Activated CD4-positive, alpha-beta memory T cell treated with anti-CD3 and anti-CD28 coated beads for 36 hours (primary cell): ENCODE measurements at regions of chr2 and their contacts with region 1.

Region 1: GRCh38 chr2:230987137-230988020 is 8.5 kb upstream of the SPATA3 start:
- DNase-seq: peak; percentile 83
- H3K4me3 Mint-ChIP-seq: peak overlapping the region; percentile 41
- H3K27ac Mint-ChIP-seq: peak overlapping the region; percentile 2
- H3K4me1 Mint-ChIP-seq: peaks cover 38% of the 10 kb centered on the region
- H3K27me3 Mint-ChIP-seq: peaks cover 24% of the 10 kb centered on the region

Region 2: GRCh38 chr2:230847883-230848388 is 139.4 kb before region 1 on chr2:
- CTCF ChIA-PET with region 1: interaction called, 79 read pairs
- POLR2A ChIA-PET with region 1: no interaction called
- intact Hi-C with region 1: loop called (anchors 1 kb)
- DNase-seq: peak; percentile 96
- H3K4me3 Mint-ChIP-seq: peak overlapping the region; percentile 21
- H3K27ac Mint-ChIP-seq: peak overlapping the region; percentile 33
- H3K4me1 Mint-ChIP-seq: peaks cover 20% of the 10 kb centered on the region
- H3K27me3 Mint-ChIP-seq: peaks cover 31% of the 10 kb centered on the region

Region 3: DNA sequence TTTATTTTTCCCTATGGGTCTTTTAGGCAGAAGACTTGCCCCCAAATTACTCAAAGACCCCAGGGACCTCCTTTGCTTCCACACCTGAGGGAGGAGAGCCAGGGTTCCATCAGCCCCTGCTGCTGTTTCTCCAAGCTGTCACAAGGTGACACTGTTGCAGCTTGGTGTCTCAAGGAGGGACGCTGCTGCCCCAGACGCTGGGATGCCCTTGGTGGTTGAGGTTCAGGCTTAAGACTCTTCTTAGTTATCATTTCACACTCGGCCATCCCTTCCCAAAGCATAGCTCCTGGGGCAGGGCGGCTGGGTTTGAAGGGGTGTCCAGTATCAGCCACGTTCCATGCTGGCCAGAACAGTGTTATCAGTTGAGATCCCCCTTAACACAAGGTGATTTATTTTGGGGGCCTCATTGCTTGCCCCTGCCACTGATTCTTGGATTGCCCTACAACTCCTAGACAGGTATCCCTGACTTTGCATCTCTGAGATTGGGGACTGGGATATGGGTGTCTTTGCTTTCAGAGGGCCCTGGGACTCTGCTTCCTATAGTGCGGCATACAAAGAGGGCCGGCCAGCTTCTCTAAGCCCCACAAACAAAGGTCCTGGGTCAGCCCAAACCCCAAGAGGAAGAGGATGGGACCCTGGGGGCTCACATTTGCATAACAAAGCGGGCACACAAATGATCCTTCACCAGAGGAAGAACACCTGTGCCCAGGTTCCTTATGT is 85.0 kb before region 1 on chr2:
- CTCF ChIA-PET with region 1: interaction called, 313 read pairs
- POLR2A ChIA-PET with region 1: interaction called, 15 read pairs
- intact Hi-C with region 1: loop called (anchors 1 kb)
- DNase-seq: peak; percentile 72
- H3K4me3 Mint-ChIP-seq: no peak overlapping the region
- H3K27ac Mint-ChIP-seq: no peak overlapping the region
- H3K4me1 Mint-ChIP-seq: peaks cover 49% of the 10 kb centered on the region
- H3K27me3 Mint-ChIP-seq: peaks cover 21% of the 10 kb centered on the region

Region 4: GRCh38 chr2:230924470-230925341 is 62.7 kb before region 1 on chr2 and contains the start of gene GPR55:
- CTCF ChIA-PET with region 1: interaction called, 110 read pairs
- POLR2A ChIA-PET with region 1: interaction called, 49 read pairs
- intact Hi-C with region 1: loop called (anchors 1 kb)
- DNase-seq: peak; percentile 90
- H3K4me3 Mint-ChIP-seq: peak within 1 kb of the TSS; percentile 74
- H3K27ac Mint-ChIP-seq: peak within 1 kb of the TSS; percentile 91
- H3K4me1 Mint-ChIP-seq: peaks cover 58% of the 10 kb centered on the region
- H3K27me3 Mint-ChIP-seq: peaks cover 11% of the 10 kb centered on the region
- total RNA-seq, gene GPR55: 1.5 to 1.6 TPM

Region 5: DNA sequence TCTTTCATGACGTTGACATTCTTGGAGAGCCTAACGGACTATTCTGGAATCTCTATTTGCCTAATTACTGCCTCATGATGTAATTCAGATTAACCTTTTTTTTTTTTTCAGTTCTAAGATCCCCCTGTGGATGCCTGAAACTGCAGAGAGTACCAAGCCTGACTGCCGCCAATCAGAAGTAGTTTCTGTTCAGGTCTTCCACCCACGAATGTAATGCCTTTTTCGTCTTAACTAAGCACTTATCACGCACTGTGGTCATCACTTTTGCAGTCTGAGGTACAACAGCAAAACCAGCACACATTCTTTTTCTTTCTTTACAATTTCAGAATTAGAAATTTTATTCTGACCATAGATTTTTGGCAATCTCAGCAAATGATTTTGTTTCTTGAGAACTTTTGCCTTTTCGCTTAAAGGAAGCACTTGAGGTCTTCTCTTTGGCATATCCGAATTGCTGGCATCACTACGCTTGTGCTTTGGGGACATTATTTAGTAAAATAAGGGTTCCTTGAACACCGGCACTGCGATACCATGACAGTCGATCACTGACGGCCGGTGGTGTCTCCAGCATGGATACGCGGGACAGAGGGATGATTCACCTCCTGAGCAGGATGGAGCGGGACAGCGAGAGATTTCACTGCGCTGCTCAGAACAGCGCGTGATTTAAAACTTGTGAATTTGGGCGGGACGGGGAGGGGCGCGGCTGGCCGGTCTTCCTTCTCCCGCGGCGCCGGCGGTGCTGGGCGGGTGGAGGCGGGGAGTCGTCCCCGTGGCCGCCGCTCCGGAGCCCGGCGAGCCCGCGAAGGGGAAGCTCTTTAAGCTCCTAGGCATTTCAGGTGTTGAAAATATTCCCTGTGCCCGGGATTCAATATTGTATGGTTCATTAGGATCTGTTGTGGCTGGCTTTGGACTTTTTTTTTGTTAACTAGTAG is 30.3 kb before region 1 on chr2:
- CTCF ChIA-PET with region 1: interaction called, 15 read pairs
- POLR2A ChIA-PET with region 1: interaction called, 5 read pairs
- intact Hi-C with region 1: loop called (anchors 1 kb)
- DNase-seq: peak; percentile 65
- H3K4me3 Mint-ChIP-seq: peak overlapping the region; percentile 77
- H3K27ac Mint-ChIP-seq: peak overlapping the region; percentile 82
- H3K4me1 Mint-ChIP-seq: peaks cover 46% of the 10 kb centered on the region
- H3K27me3 Mint-ChIP-seq: peaks cover 58% of the 10 kb centered on the region

Region 6: DNA sequence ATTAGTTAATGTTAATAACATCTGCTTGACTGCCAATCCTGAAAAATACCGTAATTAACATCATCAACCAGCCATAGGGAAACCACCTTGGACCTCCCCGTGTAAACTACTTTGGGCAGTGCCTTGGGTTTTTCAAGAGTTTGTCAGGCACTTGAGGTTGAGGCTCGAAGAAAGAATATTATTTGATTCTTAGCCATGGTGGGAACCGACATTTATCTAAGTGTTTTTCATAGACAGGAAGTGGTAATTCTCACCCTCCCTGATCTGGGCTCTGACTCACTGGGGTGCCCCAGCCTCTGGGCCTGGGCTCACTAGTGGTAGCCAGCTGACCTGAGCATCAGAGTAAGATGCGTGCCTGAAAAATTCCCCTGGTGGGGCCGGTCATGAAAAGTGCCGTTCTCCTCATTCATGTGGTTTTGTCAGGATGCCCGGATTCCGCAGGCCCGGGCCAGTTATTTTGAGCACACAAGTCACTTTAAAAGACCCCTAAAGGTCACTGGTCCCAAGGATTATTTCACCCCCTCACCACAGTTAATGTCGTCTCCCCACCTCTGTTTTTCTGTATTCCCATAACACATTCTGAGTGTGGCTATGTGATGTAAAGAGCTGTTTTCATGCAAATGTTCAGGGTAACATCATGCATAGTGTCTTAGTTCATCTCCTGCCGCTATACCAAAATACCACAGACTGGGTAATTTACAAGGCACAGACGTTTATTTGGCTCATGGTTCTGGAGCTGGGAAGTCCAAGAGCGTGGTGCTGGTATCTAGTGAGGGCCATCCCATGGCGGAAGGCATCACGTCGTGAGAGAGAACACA is 13.1 kb before region 1 on chr2:
- CTCF ChIA-PET with region 1: interaction called, 13 read pairs
- POLR2A ChIA-PET with region 1: interaction called, 24 read pairs
- intact Hi-C with region 1: loop called (anchors 1 kb)
- DNase-seq: peak; percentile 87
- H3K4me3 Mint-ChIP-seq: peak overlapping the region; percentile 17
- H3K27ac Mint-ChIP-seq: peak overlapping the region; percentile 85
- H3K4me1 Mint-ChIP-seq: peaks cover 54% of the 10 kb centered on the region
- H3K27me3 Mint-ChIP-seq: peaks cover 15% of the 10 kb centered on the region